HepG2 (cell line): ENCODE measurements at regions of chr10 and their contacts with region 1.

Region 1: GRCh38 chr10:77756319-77757232 is 119.0 kb upstream of the KCNMA1 start:
- DNase-seq: peak; percentile 59
- ATAC-seq: peak; percentile 95
- H3K4me3 ChIP-seq: no peak overlapping the region
- H3K27ac ChIP-seq: no peak overlapping the region
- H3K4me1 ChIP-seq: no peaks in the 10 kb centered on the region
- H3K27me3 ChIP-seq: no peaks in the 10 kb centered on the region
- CTCF ChIP-seq: peak; percentile 76
- EP300 ChIP-seq: no peak
- POLR2A ChIP-seq: no peak
- RAD21 ChIP-seq: peak; percentile 55; the same call in 1 of the 2 replicates

Region 2: GRCh38 chr10:77448226-77448625 is 308.4 kb before region 1 on chr10:
- CTCF ChIA-PET with region 1: no interaction called
- POLR2A ChIA-PET with region 1: no interaction called
- in situ Hi-C with region 1: no loop called
- intact Hi-C with region 1: no loop called
- DNase-seq: no peak
- ATAC-seq: no peak
- H3K4me3 ChIP-seq: no peak overlapping the region
- H3K27ac ChIP-seq: no peak overlapping the region
- H3K4me1 ChIP-seq: peaks cover 16% of the 10 kb centered on the region
- H3K27me3 ChIP-seq: no peaks in the 10 kb centered on the region; a peak in 2 of 5 replicates
- CTCF ChIP-seq: no peak
- EP300 ChIP-seq: no peak
- POLR2A ChIP-seq: no peak
- RAD21 ChIP-seq: no peak

Region 3: DNA sequence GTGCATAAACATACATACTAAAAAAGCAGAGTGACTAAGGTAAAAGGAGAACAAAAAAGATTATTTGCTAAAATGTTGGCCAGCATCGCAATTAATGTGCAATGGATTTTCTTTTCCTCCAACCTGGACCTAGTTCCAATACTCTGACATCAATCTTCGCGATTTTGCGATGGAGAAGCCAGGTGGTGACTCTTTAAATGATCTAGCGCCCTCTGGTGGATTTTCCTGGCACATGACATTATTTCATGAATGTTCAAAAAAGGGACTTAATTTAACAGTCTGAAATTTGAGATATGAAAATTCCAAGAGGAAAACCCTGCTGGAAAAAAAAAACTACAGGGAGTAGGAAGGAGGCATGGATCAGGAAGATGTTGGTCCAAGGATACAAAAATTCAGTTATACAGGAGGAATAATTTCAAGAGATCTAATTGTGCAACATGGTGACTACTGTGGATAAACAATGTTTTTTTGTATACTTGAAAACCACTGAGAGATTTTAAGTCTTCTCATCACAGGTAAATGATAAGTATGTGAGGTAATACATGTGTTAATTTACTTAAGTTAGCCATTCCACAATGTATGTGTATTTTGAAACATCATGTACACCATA is 114.7 kb before region 1 on chr10:
- CTCF ChIA-PET with region 1: no interaction called
- POLR2A ChIA-PET with region 1: no interaction called
- in situ Hi-C with region 1: no loop called
- intact Hi-C with region 1: no loop called
- DNase-seq: peak; percentile 63
- ATAC-seq: peak; percentile 52; the same call in 1 of the 3 replicates
- H3K4me3 ChIP-seq: no peak overlapping the region
- H3K27ac ChIP-seq: no peak overlapping the region
- H3K4me1 ChIP-seq: no peaks in the 10 kb centered on the region
- H3K27me3 ChIP-seq: peaks cover 2 to 9% of the 10 kb centered on the region in 2 experiments; a peak in 3 of 5 replicates
- CTCF ChIP-seq: peak; percentile 76
- EP300 ChIP-seq: no peak
- POLR2A ChIP-seq: no peak
- RAD21 ChIP-seq: peak; percentile 61

Region 4: DNA sequence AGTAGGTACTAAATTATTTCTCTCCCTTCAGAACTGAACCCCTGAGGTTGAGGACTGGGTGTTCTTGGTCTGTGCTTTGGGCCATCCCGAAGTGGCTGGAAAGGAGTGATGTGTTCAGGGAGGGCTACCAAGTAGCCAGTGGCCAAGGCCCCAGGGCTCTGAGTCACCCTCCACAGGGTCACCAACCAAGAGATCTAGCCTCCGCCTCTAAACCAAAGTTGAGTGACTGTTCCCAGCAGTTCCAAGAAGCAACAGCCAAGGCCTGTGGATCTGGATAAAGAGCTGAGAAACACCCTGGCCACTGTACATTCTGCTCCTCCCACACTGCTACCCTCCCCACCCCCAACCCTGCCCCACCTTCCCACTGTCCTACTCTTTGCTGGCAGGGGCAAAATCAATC is 83.5 kb before region 1 on chr10:
- CTCF ChIA-PET with region 1: no interaction called
- POLR2A ChIA-PET with region 1: no interaction called
- in situ Hi-C with region 1: no loop called
- intact Hi-C with region 1: no loop called
- DNase-seq: no peak
- ATAC-seq: no peak
- H3K4me3 ChIP-seq: no peak overlapping the region
- H3K27ac ChIP-seq: no peak overlapping the region
- H3K4me1 ChIP-seq: no peaks in the 10 kb centered on the region
- H3K27me3 ChIP-seq: no peaks in the 10 kb centered on the region; a peak in 2 of 5 replicates
- CTCF ChIP-seq: no peak
- EP300 ChIP-seq: no peak
- POLR2A ChIP-seq: no peak
- RAD21 ChIP-seq: no peak

Region 5: GRCh38 chr10:77718957-77719356 is 37.6 kb before region 1 on chr10:
- CTCF ChIA-PET with region 1: interaction called, 12 read pairs
- POLR2A ChIA-PET with region 1: no interaction called
- in situ Hi-C with region 1: loop called (anchors 5 kb)
- intact Hi-C with region 1: loop called (anchors 1 kb)
- DNase-seq: no peak
- ATAC-seq: no peak
- H3K4me3 ChIP-seq: no peak overlapping the region
- H3K27ac ChIP-seq: no peak overlapping the region
- H3K4me1 ChIP-seq: no peaks in the 10 kb centered on the region
- H3K27me3 ChIP-seq: peaks cover 1 to 4% of the 10 kb centered on the region in 2 experiments; a peak in 2 of 5 replicates
- CTCF ChIP-seq: no peak
- EP300 ChIP-seq: no peak
- POLR2A ChIP-seq: no peak
- RAD21 ChIP-seq: no peak